AG04449 (cell line): ENCODE measurements at regions of chr11 and their contacts with region 1.

Region 1: DNA sequence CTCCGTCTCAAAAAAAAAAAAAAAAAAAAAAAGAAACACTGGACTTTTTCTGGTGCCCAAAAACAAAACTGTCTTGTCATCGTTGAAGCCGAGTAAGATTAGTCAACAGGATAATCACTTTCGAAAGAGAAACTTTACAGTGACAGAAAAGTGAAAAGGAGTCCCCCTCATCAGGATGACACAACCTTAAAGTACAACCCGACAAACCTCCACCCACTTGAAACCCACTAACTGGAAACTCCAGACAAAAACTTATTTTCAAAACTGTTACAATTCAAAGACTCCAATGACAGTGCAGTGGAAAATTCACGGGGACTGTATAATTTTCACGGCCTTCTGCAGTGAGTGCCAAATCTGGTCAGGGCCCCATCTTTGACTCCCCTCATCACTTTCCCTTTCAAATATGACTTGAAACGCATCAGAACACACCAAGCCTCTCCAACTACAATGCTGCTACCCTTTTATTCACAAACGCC is 1.3 kb downstream of the DENND5A start:
- DNase-seq: no peak
- H3K4me3 ChIP-seq: peak overlapping the region; percentile 88
- CTCF ChIP-seq: no peak

Region 2: DNA sequence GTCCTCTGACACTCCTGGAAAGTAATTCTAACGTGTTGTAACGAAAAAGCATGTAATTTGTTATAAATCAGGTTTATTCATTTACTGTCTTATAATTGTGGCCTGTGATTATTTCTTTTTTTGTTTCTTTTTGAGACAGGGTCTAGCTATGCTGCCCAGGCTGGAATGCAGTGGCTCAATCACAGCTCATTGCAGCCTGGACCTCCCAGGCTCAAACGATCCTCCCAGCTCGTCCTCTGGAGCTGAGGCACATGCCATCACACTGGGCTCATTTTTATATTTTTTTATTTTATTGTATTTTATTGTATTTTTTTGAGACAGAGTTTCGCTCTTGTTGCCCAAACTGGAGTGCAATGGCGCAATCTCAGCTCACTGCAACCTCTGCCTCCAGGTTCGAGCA is 14.6 kb before region 1 on chr11:
- CTCF ChIA-PET with region 1: interaction called, 3 read pairs
- POLR2A ChIA-PET with region 1: interaction called, 10 read pairs
- DNase-seq: no peak
- H3K4me3 ChIP-seq: no peak overlapping the region
- CTCF ChIP-seq: no peak

Region 3: GRCh38 chr11:9396752-9397151 is 132.9 kb after region 1 on chr11:
- CTCF ChIA-PET with region 1: no interaction called
- POLR2A ChIA-PET with region 1: no interaction called
- DNase-seq: no peak
- H3K4me3 ChIP-seq: no peak overlapping the region
- CTCF ChIP-seq: no peak